ENCODE measurements at regions of chr2 and their contacts with region 1.

Region 1: DNA sequence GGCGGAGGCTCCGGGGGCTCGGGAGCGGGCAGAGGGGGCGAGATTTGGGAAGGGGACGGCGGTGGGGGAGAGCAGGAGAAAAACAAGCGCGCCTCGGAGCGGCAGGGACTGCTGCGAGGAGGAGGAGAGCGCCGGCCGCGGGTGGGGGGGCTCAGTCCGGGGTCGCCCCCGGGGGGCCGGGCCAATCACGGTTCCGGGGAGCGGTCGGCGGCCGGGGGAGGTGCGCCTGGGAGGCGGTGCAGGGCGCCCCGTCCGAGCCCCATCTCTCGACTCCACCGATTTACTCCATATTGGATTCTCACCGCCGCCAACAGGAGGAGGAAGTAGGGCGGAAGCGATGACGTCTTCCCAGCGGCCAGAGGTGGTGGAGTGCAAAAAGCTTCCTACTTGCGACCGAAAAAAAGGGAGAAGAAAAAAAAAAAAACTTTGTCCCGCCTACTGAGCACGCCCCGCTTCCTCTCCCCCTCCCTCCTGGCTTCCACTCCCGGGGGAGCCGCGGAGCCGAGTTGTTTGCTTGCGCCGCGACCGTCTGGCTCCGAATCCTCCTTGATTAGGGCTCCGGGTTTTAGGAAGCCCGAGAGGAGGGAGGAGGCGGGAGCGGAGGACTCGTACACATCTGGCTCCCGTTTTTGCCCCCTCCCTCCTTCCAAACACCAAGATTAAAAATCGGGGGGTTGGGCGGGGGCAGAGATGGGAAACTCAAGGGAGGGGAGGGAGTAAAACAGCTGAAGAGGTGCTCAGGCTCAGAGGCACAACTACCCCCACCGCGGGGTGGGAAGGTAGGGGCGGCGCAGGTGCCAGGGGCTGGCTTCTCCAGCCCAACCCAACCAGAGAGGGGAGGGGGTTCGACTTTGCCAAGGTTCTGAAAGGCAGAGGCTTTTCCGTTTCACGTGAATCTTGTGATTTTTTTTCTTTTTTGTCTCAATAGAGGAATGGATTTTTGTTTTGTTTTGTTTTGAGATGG is at the start of gene SPRED2:
- DNase-seq: peak; percentile 71
- H3K4me3 Mint-ChIP-seq: peak within 1 kb of the TSS; percentile 95
- H3K27ac Mint-ChIP-seq: peak within 1 kb of the TSS; percentile 92
- H3K4me1 Mint-ChIP-seq: peaks cover 24% of the 10 kb centered on the region
- H3K27me3 Mint-ChIP-seq: peaks cover 37% of the 10 kb centered on the region
- total RNA-seq, gene SPRED2: 8.5 and 9.4 TPM in 2 replicates

Region 2: DNA sequence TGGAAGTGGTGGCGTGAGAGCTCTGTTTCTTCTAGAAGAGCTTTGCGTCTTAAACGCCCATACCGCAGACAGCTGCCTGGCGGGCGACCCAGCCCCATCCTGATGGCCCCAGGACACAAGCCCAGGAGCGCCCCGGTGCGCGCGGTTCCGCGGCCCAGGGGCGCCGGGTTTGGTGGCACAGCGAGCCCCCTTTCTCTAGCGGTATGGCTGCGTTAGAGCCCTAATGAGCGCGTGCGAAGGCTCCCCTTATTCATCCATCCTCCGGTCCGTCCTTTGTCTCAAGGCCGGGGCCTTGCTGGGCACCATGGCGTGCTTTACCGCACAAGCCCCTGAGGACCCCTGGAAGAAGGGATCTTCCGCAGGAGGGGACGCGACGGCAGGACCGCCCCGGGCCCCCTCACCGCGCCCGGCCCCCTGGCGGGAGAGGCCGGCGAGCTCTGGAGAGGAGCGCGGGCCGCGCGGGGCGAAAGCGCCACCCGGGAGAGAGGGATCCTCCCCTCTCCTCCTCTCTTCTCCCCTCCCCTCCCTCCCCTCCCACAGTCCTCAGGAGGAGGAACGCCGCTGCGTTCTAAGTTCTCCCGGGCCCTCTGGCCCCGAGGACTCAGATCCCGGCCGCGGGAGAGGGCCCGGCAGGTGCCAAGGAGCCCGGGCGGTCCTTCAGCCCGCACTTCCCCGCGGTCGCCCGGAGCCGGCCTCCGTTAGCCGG is 443.9 kb before region 1 on chr2:
- intact Hi-C with region 1: loop called (anchors 2 kb)
- DNase-seq: peak; percentile 75
- H3K4me3 Mint-ChIP-seq: peak overlapping the region; percentile 88
- H3K27ac Mint-ChIP-seq: peak overlapping the region; percentile 92
- H3K4me1 Mint-ChIP-seq: peaks cover 79% of the 10 kb centered on the region
- H3K27me3 Mint-ChIP-seq: peaks cover 11% of the 10 kb centered on the region

Region 3: DNA sequence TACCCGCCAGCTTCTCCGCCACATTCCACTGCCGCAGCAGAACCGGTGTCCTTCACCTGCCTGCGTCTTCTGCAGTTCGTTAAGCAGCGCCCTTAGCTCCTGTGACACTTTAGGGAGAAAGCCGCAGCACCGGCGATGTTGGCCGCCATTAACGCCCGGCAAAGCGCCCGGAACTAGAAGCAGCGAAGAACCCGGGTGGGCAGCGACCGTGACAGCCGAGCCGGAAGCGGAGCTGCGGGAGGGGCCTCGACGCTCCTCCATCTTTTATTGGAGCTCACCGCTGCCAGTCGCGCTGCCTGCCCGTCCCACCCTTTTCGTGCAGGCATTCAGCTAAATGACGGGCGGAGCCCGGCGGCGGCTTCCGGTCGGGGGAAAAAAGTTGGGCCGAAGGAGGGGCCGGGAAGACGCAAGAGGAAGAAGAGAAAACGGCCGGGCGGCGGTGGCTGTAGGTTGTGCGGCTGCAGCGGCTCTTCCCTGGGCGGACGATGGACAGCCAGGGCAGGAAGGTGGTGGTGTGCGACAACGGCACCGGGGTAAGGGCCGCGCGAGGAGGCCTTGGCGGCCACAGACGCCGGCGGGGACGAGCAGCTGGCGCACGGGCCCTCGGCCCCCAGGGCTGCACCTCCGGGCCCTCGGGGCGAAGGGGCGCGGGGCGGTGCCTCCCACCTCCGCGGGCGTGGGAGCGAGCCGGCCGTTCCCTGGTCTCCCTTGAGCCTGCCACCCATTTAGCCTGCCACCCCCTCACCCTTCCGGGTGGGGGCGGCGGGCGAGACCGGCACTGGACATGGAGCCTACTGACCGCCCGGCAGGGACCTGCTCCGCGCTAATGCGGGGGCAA is 204.9 kb before region 1 on chr2 and contains the start of gene ACTR2:
- intact Hi-C with region 1: loop called (anchors 1 kb)
- DNase-seq: peak; percentile 95
- H3K4me3 Mint-ChIP-seq: peak within 1 kb of the TSS; percentile 98
- H3K27ac Mint-ChIP-seq: peak within 1 kb of the TSS; percentile 99
- H3K4me1 Mint-ChIP-seq: peaks cover 36% of the 10 kb centered on the region
- H3K27me3 Mint-ChIP-seq: no peaks in the 10 kb centered on the region
- total RNA-seq, gene ACTR2: 285 and 295 TPM in 2 replicates

Region 4: DNA sequence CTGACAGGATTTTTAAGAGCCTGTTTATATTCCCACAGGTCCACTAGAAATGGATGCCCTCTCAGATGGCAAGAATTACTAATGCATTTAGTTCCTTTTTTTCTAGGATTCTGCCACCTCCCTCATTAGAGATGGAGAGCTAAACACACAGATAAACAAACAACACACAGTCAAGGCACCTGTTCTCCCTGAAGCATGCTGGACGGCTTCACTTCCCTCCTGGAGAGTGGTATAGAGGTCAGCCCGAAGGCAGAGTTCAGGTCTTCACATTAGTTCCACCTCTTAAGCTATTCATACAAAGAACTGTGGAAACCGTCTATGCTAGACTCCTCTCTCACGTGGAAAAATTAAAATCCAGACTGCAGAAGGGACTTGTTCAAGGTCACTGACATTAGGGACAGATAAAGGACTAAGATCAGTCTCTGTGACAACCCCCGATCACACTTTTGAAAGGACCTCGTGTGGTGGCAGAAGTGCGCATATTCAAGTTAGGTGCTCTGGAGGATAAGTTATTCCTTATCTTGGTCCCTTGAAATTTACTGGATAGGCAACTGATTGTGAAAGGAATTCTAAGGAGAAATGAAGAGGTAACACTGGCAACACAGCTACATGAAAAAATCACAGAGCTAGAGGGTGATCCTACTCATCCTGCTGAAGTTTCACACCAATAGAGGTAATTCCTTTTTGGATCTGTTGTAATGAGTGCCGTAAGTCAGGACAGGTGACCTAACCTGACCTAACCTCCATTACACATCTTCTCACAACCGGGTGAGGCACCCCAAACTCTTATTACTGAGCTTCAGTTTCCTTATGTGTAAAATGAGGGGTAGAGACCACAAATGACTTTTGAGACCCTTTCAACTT is 75.2 kb before region 1 on chr2:
- intact Hi-C with region 1: loop called (anchors 1 kb)
- DNase-seq: no peak
- H3K4me3 Mint-ChIP-seq: no peak overlapping the region
- H3K27ac Mint-ChIP-seq: peak overlapping the region; percentile 24
- H3K4me1 Mint-ChIP-seq: peaks cover 71% of the 10 kb centered on the region
- H3K27me3 Mint-ChIP-seq: peaks cover 2% of the 10 kb centered on the region

Region 5: GRCh38 chr2:65416945-65417344 is 15.6 kb before region 1 on chr2:
- intact Hi-C with region 1: loop called (anchors 1 kb)
- DNase-seq: no peak
- H3K4me3 Mint-ChIP-seq: no peak overlapping the region
- H3K27ac Mint-ChIP-seq: peak overlapping the region; percentile 65
- H3K4me1 Mint-ChIP-seq: peaks cover 36% of the 10 kb centered on the region
- H3K27me3 Mint-ChIP-seq: peaks cover 6% of the 10 kb centered on the region

Region 6: GRCh38 chr2:65514555-65515195 is 82.2 kb after region 1 on chr2:
- intact Hi-C with region 1: no loop called
- DNase-seq: no peak
- H3K4me3 Mint-ChIP-seq: no peak overlapping the region
- H3K27ac Mint-ChIP-seq: no peak overlapping the region
- H3K4me1 Mint-ChIP-seq: peaks cover 6% of the 10 kb centered on the region
- H3K27me3 Mint-ChIP-seq: no peaks in the 10 kb centered on the region

Region 7: DNA sequence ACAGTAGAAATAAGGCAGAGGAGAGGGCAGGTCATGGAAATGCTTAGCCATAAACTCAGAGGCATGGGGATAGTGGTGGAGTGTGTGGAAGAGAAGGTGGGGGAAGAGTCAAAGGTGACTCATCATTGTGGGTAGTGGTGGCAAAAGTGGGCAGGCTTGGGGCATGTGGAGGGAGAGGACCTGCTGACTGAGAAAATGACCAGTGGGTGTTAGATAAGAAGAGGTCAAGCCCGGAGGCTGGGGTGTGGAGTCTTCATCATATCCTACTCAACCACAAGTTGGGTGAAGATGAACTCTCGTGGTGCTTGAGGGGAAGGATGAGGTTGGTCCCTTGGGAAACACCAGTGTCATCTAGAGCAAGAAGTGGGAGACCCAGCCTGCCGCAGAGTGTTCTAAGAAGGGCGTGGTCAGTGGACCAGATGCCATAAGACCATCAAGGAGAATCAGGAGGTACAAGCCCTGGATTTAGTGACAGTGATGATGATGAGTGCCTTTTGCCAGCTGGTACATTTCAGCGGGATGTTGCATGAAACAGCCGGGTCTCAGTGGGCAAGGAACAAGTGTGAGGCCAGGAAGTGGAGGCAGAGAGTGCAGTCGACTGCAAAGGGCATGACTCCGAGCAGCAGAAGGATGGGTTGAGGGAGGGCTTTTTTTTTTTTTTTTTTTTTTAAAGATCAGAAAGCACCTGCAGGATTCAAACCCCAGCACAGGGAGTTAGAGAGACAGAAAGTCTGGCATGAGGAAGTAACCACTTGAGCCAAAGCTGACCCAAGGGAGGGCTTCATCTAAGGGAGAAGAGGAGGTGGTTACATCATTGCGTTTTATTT is 122.5 kb after region 1 on chr2:
- intact Hi-C with region 1: loop called (anchors 1 kb)
- DNase-seq: no peak
- H3K4me3 Mint-ChIP-seq: peak overlapping the region; percentile 6
- H3K27ac Mint-ChIP-seq: peak overlapping the region; percentile 38
- H3K4me1 Mint-ChIP-seq: peaks cover 16% of the 10 kb centered on the region
- H3K27me3 Mint-ChIP-seq: peaks cover 30% of the 10 kb centered on the region

Measured in activated T-helper 1 cell treated with anti-CD3 and anti-CD28 coated beads, Interleukin-12 subunit alpha, Interleukin-12 subunit beta, Interleukin-2, Interleukin-4 antibody, amounts not matched to agents 30 ng/mL and 10 ng/mL and 1 ng/mL, durations not matched to agents 14 hours and 24 hours and 36 hours (primary cell).